Panc1 (cell line): ENCODE measurements at regions of chr11 and their contacts with region 1.

Region 1: DNA sequence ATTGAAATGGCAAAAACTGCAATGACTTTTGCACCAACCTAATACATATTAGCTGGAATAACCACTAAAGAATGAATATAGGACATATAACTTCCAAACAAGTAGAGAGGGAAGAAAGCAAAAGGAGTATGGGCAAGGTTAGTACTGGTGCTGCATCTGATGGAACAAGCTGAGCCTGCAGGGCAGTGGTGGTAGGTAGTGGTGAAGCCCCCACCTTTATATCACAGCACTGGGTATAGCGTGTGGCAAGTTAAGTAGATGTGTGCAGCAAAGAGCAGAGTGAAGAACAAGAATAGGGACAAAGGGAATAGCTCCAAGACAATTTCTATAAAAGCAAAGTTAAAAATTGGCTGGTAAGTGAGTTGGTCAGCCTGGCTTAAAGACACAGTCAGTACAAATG is 62.3 kb downstream of the CTNND1 start:
- DNase-seq: no peak
- ATAC-seq: no peak
- H3K4me3 ChIP-seq: no peak overlapping the region
- H3K27ac ChIP-seq: no peak overlapping the region
- H3K4me1 ChIP-seq: no peaks in the 10 kb centered on the region
- H3K27me3 ChIP-seq: no peaks in the 10 kb centered on the region
- CTCF ChIP-seq: no peak

Region 2: GRCh38 chr11:57426929-57427726 is 396.7 kb before region 1 on chr11 and contains the start of gene SLC43A3:
- CTCF ChIA-PET with region 1: no interaction called
- POLR2A ChIA-PET with region 1: no interaction called
- in situ Hi-C with region 1: no loop called
- intact Hi-C with region 1: no loop called
- DNase-seq: no peak
- ATAC-seq: peak; percentile 83
- H3K4me3 ChIP-seq: peak within 1 kb of the TSS; percentile 37 to 48
- H3K27ac ChIP-seq: peak within 1 kb of the TSS; percentile 73; the same call in 1 of the 2 replicates
- H3K4me1 ChIP-seq: peaks cover 8% of the 10 kb centered on the region
- H3K27me3 ChIP-seq: 0 out of 2 replicates have a peak, but pooled peaks cover 6% of the 10 kb centered on the region
- CTCF ChIP-seq: no peak
- total RNA-seq, gene SLC43A3: 8.6 TPM

Region 3: GRCh38 chr11:58286249-58286648 is 462.4 kb after region 1 on chr11:
- CTCF ChIA-PET with region 1: no interaction called
- POLR2A ChIA-PET with region 1: no interaction called
- in situ Hi-C with region 1: no loop called
- intact Hi-C with region 1: loop called (anchors 10 kb)
- DNase-seq: peak; percentile 15
- ATAC-seq: peak; percentile 94
- H3K4me3 ChIP-seq: no peak overlapping the region
- H3K27ac ChIP-seq: no peak overlapping the region
- H3K4me1 ChIP-seq: no peaks in the 10 kb centered on the region
- H3K27me3 ChIP-seq: no peaks in the 10 kb centered on the region
- CTCF ChIP-seq: peak; percentile 80

Region 4: GRCh38 chr11:58524232-58525036 is 700.6 kb after region 1 on chr11:
- CTCF ChIA-PET with region 1: no interaction called
- POLR2A ChIA-PET with region 1: no interaction called
- in situ Hi-C with region 1: no loop called
- intact Hi-C with region 1: loop called (anchors 10 kb)
- DNase-seq: peak; percentile 59
- ATAC-seq: peak; percentile 99
- H3K4me3 ChIP-seq: peak overlapping the region in 1 of 2 experiments; percentile 23; a peak in 1 of 4 replicates
- H3K27ac ChIP-seq: no peak overlapping the region
- H3K4me1 ChIP-seq: peaks cover 3% of the 10 kb centered on the region
- H3K27me3 ChIP-seq: peaks cover 7% of the 10 kb centered on the region; the same call in 1 of the 2 replicates
- CTCF ChIP-seq: peak; percentile 90